Caco-2 (cell line): ENCODE measurements at regions of chr10 and their contacts with region 1.

Region 1: GRCh38 chr10:67849331-67850011 is 11.5 kb upstream of the DNAJC12 start:
- DNase-seq: peak; percentile 98
- H3K4me3 ChIP-seq: peak overlapping the region; percentile 51
- H3K4me3 Mint-ChIP-seq: peak overlapping the region; percentile 94
- H3K27ac Mint-ChIP-seq: peak overlapping the region; percentile 95
- H3K4me1 ChIP-seq: no peaks in the 10 kb centered on the region
- H3K4me1 Mint-ChIP-seq: peaks cover 6% of the 10 kb centered on the region
- H3K27me3 ChIP-seq: no peaks in the 10 kb centered on the region
- H3K27me3 Mint-ChIP-seq: no peaks in the 10 kb centered on the region
- CTCF ChIP-seq: no peak

Region 2: DNA sequence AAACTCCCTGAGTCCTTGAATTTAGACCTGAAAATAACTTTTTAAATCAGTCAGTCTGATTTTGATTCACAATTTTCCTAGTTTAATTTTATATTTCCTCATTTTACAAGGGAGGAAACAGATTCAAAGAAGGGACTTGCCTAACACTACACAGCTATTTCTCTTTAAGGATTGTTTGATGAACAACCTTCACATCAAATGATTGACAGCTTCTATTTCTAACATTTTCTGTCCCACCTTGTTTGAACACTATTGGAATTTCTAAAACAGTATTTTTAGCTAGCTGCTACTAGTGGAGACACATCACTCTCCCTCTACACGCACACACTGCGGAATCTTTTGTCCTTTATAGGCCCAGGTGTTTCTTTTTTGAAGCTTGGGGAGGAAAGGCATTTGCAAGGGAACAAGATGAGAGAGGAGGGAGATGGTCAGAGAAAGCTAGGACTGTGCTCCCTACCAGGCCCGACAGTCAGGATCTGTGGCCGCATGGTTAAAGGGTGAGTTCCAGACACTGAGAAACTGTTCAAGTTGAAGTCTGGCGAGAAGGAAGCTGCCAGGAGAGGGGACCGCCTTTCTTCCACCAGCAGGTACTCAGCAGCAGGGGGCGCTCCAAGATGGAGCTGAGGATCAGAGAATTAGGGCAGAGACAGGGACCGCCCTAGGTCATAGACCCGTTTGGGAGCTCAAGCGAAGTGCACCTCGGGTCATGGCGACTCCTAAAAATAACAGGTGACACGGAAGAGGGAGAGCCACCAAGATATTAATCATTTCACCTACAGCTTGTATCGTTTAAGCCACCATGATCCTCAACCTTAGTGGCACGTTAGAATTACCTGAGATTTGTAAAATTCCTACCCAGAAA is 61.2 kb before region 1 on chr10:
- CTCF ChIA-PET with region 1: no interaction called
- POLR2A ChIA-PET with region 1: no interaction called
- intact Hi-C with region 1: loop called (anchors 2 kb)
- DNase-seq: peak; percentile 61 to 69
- H3K4me3 ChIP-seq: no peak overlapping the region
- H3K4me3 Mint-ChIP-seq: no peak overlapping the region
- H3K27ac Mint-ChIP-seq: peak overlapping the region; percentile 18
- H3K4me1 ChIP-seq: no peaks in the 10 kb centered on the region
- H3K4me1 Mint-ChIP-seq: peaks cover 13% of the 10 kb centered on the region
- H3K27me3 ChIP-seq: no peaks in the 10 kb centered on the region
- H3K27me3 Mint-ChIP-seq: no peaks in the 10 kb centered on the region
- CTCF ChIP-seq: peak; percentile 57 to 80

Region 3: GRCh38 chr10:68074775-68075549 is 225.5 kb after region 1 on chr10 and contains the start of gene HERC4:
- CTCF ChIA-PET with region 1: no interaction called
- POLR2A ChIA-PET with region 1: no interaction called
- intact Hi-C with region 1: loop called (anchors 1 kb)
- DNase-seq: peak; percentile 98
- H3K4me3 ChIP-seq: peak within 1 kb of the TSS; percentile 91
- H3K4me3 Mint-ChIP-seq: peak within 1 kb of the TSS; percentile 97
- H3K27ac Mint-ChIP-seq: peak within 1 kb of the TSS; percentile 94
- H3K4me1 ChIP-seq: peaks cover 18% of the 10 kb centered on the region
- H3K4me1 Mint-ChIP-seq: peaks cover 18% of the 10 kb centered on the region
- H3K27me3 ChIP-seq: no peaks in the 10 kb centered on the region
- H3K27me3 Mint-ChIP-seq: no peaks in the 10 kb centered on the region
- CTCF ChIP-seq: no peak
- total RNA-seq, gene HERC4: 59.4 and 65.2 TPM in 2 replicates

Region 4: DNA sequence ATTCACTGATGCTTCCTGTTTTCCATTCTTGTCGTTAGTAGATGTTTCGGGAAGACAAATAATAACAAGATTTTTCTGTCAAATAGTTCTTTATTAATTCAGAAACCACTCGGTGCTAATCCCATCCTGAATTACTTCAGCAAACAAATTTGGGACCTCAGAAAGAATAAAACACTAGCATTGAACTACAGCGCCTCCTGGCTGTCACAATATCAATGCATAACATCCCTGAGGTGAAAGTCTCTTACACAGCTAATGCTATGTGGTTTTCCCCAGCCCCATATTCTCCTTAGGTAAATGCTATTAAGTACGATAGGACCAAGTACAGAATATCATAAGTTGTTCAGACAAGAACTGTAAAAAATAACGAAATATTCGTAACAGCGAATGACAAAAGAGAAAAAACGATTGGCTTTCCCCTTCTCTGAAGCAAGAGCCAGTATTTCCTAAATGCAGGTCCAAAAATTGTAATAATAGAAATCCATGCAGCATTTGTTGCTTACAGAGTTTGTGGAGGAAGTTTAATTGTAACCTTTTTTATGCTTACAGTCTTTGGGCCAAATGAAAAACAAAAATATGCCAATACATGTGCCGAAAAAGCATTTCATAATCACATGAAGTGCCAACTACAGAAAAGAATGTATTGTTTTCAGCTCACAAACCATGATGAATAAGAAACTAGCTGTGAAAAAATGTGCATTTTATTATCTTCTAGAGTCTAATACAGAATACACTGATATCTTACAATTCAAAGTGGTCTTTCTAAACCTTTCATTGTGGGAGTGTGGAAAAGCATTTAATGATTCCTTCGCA is 307.1 kb after region 1 on chr10:
- CTCF ChIA-PET with region 1: interaction called, 44 read pairs
- POLR2A ChIA-PET with region 1: no interaction called
- intact Hi-C with region 1: no loop called
- DNase-seq: peak; percentile 62 to 78
- H3K4me3 ChIP-seq: no peak overlapping the region
- H3K4me3 Mint-ChIP-seq: no peak overlapping the region
- H3K27ac Mint-ChIP-seq: no peak overlapping the region
- H3K4me1 ChIP-seq: peaks cover 10% of the 10 kb centered on the region
- H3K4me1 Mint-ChIP-seq: peaks cover 9% of the 10 kb centered on the region
- H3K27me3 ChIP-seq: no peaks in the 10 kb centered on the region
- H3K27me3 Mint-ChIP-seq: no peaks in the 10 kb centered on the region
- CTCF ChIP-seq: peak; percentile 91 to 94